ENCODE measurements at regions of chr3 and their contacts with region 1.

Region 1: GRCh38 chr3:49339945-49340800 is at the start of gene USP4:
- DNase-seq: peak; percentile 100
- H3K4me3 ChIP-seq: peak within 1 kb of the TSS; percentile 69 to 91 (median 84)
- H3K27ac ChIP-seq: peak within 1 kb of the TSS; percentile 96 to 100 (median 98)
- H3K4me1 ChIP-seq: peaks cover 40 to 95% (median 87%) of the 10 kb centered on the region in 6 donors
- H3K27me3 ChIP-seq: no peaks in the 10 kb centered on the region
- CTCF ChIP-seq: peak; percentile 13 to 67 (median 46)
- POLR2A ChIP-seq: peak; percentile 6 to 77 (median 66)
- total RNA-seq, gene USP4: 48.9 to 107 (median 84.5) TPM

Region 2: DNA sequence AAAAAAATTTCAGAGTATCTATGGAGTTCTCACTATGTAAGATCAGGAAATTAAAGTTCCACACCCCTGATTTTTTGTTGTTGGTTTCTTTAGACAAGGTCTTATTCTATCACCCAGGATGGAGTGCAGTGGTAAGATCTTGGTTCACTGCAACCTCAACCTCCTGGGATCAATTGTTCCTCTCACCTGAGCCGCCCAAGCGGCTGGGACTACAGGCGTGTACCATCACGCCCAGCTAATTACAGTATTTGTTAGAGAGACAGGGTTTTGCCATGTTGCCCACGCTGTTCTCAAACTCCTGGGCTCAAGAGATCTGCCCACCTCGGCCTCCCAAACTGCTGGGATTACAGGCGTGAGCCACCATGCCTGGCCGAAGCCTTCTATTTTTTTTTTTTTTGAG is 258.7 kb before region 1 on chr3:
- intact Hi-C with region 1: no loop called
- DNase-seq: no peak
- H3K4me3 ChIP-seq: no peak overlapping the region
- H3K27ac ChIP-seq: no peak overlapping the region
- H3K4me1 ChIP-seq: peaks cover 0 to 72% (median 11%) of the 10 kb centered on the region in 6 donors
- H3K27me3 ChIP-seq: no peaks in the 10 kb centered on the region
- CTCF ChIP-seq: no peak
- POLR2A ChIP-seq: no peak

Region 3: DNA sequence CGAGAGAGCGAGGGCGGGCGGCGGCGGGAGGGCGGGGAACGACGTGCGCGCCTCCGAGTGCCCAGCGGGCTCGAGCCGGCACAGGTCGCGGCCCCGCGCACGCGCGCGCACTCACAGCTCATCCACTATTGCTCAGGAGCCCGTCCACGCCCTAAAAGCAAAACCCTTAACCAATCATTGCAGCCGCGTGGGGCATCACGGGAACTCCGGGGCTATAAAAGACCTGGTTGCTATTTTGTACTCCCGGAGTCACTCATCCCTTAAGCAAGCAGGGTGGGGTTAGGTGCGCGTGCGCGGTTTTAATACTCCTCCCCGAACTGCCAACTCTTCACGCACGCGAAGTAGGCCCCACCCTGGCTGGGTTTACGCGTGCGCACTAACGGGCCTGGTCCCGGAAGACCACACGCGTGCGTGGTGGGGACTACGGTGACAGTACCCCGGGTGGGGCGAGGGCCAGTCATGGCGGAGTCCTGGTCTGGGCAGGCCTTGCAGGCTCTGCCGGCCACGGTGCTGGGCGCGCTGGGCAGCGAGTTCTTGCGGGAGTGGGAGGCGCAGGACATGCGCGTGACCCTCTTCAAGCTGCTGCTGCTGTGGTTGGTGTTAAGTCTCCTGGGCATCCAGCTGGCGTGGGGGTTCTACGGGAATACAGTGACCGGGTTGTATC is 71.9 kb after region 1 on chr3 and contains the starts of genes RHOA and TCTA:
- intact Hi-C with region 1: loop called (anchors 5 kb)
- DNase-seq: peak; percentile 100
- H3K4me3 ChIP-seq: peak within 1 kb of the TSS; percentile 61 to 92 (median 78)
- H3K27ac ChIP-seq: peak within 1 kb of the TSS; percentile 93 to 100 (median 98)
- H3K4me1 ChIP-seq: peaks cover 63 to 87% (median 82%) of the 10 kb centered on the region in 6 donors
- H3K27me3 ChIP-seq: no peaks in the 10 kb centered on the region
- CTCF ChIP-seq: peak in 2 of 11 experiments; percentile 9 to 35
- POLR2A ChIP-seq: peak; percentile 76 to 91 (median 89)
- total RNA-seq, gene RHOA: 452 to 693 (median 522) TPM
- total RNA-seq, gene TCTA: 22.1 to 39.4 (median 28.6) TPM

Region 4: GRCh38 chr3:49445381-49445780 is 105.2 kb after region 1 on chr3:
- intact Hi-C with region 1: loop called (anchors 10 kb)
- DNase-seq: no peak
- H3K4me3 ChIP-seq: no peak overlapping the region
- H3K27ac ChIP-seq: peak overlapping the region in 6 of 8 donors; percentile 36 to 86 (median 82)
- H3K4me1 ChIP-seq: peaks cover 12 to 51% (median 27%) of the 10 kb centered on the region in 6 donors
- H3K27me3 ChIP-seq: no peaks in the 10 kb centered on the region
- CTCF ChIP-seq: no peak
- POLR2A ChIP-seq: no peak

Measured in spleen (tissue), 13 donors.